ENCODE measurements at regions of chr10 and their contacts with region 1.

Region 1: GRCh38 chr10:71597821-71598498 is 121.6 kb downstream of the C10orf105 start:
- DNase-seq: peak; percentile 71
- ATAC-seq: peak; percentile 87
- H3K4me3 ChIP-seq: no peak overlapping the region
- H3K4me3 Mint-ChIP-seq: no peak overlapping the region
- H3K27ac ChIP-seq: no peak overlapping the region
- H3K27ac Mint-ChIP-seq: peak overlapping the region; percentile 22
- H3K4me1 ChIP-seq: peaks cover 0 to 8% of the 10 kb centered on the region in 2 donors
- H3K4me1 Mint-ChIP-seq: peaks cover 9% of the 10 kb centered on the region
- H3K27me3 ChIP-seq: no peaks in the 10 kb centered on the region
- H3K27me3 Mint-ChIP-seq: no peaks in the 10 kb centered on the region
- CTCF ChIP-seq: no peak

Region 2: GRCh38 chr10:71608819-71609768 is 11.1 kb after region 1 on chr10:
- CTCF ChIA-PET with region 1: interaction called, 10 read pairs
- POLR2A ChIA-PET with region 1: no interaction called
- intact Hi-C with region 1: no loop called
- DNase-seq: peak; percentile 75
- ATAC-seq: no peak
- H3K4me3 ChIP-seq: no peak overlapping the region
- H3K4me3 Mint-ChIP-seq: no peak overlapping the region
- H3K27ac ChIP-seq: no peak overlapping the region
- H3K27ac Mint-ChIP-seq: no peak overlapping the region
- H3K4me1 ChIP-seq: no peaks in the 10 kb centered on the region
- H3K4me1 Mint-ChIP-seq: peaks cover 2% of the 10 kb centered on the region
- H3K27me3 ChIP-seq: peaks cover 0 to 15% (median 0%) of the 10 kb centered on the region in 4 experiments
- H3K27me3 Mint-ChIP-seq: peaks cover 10% of the 10 kb centered on the region
- CTCF ChIP-seq: peak; percentile 76

Region 3: DNA sequence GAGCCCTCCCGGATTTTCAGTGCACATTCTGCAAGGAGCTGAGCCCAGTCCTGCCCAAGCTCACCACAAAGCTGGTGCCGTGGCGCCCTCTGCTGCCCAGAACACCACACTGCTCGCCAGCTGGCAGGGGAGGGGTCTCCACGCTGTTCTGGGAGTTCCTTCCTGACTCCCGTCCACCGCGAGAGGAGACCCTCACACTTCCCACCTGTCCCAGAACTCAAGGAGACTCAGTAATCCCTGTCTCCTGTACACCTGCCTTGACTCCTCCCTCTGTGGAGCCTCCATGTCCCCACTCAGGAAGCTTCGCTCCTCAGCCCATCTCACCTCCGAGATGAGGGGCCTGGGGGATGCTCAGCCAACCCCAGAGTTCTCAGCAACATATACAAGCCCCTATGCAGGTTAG is 110.3 kb after region 1 on chr10:
- CTCF ChIA-PET with region 1: no interaction called
- POLR2A ChIA-PET with region 1: no interaction called
- intact Hi-C with region 1: no loop called
- DNase-seq: peak; percentile 74
- ATAC-seq: peak; percentile 77
- H3K4me3 ChIP-seq: no peak overlapping the region
- H3K4me3 Mint-ChIP-seq: no peak overlapping the region
- H3K27ac ChIP-seq: no peak overlapping the region
- H3K27ac Mint-ChIP-seq: no peak overlapping the region
- H3K4me1 ChIP-seq: peaks cover 16 to 22% of the 10 kb centered on the region in 2 donors
- H3K4me1 Mint-ChIP-seq: peaks cover 29% of the 10 kb centered on the region
- H3K27me3 ChIP-seq: no peaks in the 10 kb centered on the region
- H3K27me3 Mint-ChIP-seq: no peaks in the 10 kb centered on the region
- CTCF ChIP-seq: peak; percentile 89